Caco-2 (cell line): ENCODE measurements at regions of chr6 and their contacts with region 1.

Region 1: GRCh38 chr6:146041282-146041681 is 12.4 kb downstream of the GRM1 start:
- DNase-seq: peak; percentile 49 to 51
- H3K4me3 ChIP-seq: no peak overlapping the region
- H3K4me3 Mint-ChIP-seq: no peak overlapping the region
- H3K27ac Mint-ChIP-seq: no peak overlapping the region
- H3K4me1 ChIP-seq: no peaks in the 10 kb centered on the region
- H3K4me1 Mint-ChIP-seq: no peaks in the 10 kb centered on the region
- H3K27me3 ChIP-seq: no peaks in the 10 kb centered on the region
- H3K27me3 Mint-ChIP-seq: peaks cover 15% of the 10 kb centered on the region
- CTCF ChIP-seq: peak; percentile 48 to 63

Region 2: GRCh38 chr6:145734486-145735355 is 306.6 kb before region 1 on chr6:
- CTCF ChIA-PET with region 1: no interaction called
- POLR2A ChIA-PET with region 1: interaction called, 11 read pairs
- intact Hi-C with region 1: no loop called
- DNase-seq: peak; percentile 93
- H3K4me3 ChIP-seq: peak overlapping the region; percentile 79
- H3K4me3 Mint-ChIP-seq: peak overlapping the region; percentile 93
- H3K27ac Mint-ChIP-seq: peak overlapping the region; percentile 95
- H3K4me1 ChIP-seq: peaks cover 18% of the 10 kb centered on the region
- H3K4me1 Mint-ChIP-seq: peaks cover 10% of the 10 kb centered on the region
- H3K27me3 ChIP-seq: no peaks in the 10 kb centered on the region
- H3K27me3 Mint-ChIP-seq: no peaks in the 10 kb centered on the region
- CTCF ChIP-seq: no peak

Region 3: DNA sequence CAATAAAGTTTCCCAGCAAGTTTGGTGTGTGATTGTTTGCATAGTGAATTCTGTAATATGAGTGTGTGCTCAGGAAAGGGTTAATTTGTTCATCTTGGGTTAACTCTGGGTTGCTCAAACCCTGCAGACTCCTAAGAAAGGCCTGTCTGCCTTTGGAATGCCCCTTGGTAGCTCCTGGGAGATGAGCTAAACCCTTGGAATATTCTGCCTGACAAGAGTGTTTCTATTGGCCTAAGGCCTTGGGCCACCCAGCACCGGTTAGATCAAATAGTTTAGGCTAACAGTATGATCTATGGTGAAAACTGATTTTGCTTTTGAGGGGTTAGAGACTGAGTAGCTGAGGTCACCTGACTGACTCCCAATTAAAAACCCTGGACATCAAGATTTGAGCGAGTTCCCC is 235.9 kb after region 1 on chr6:
- CTCF ChIA-PET with region 1: no interaction called
- POLR2A ChIA-PET with region 1: no interaction called
- intact Hi-C with region 1: loop called (anchors 10 kb)
- DNase-seq: no peak
- H3K4me3 ChIP-seq: no peak overlapping the region
- H3K4me3 Mint-ChIP-seq: no peak overlapping the region
- H3K27ac Mint-ChIP-seq: no peak overlapping the region
- H3K4me1 ChIP-seq: no peaks in the 10 kb centered on the region
- H3K4me1 Mint-ChIP-seq: no peaks in the 10 kb centered on the region
- H3K27me3 ChIP-seq: no peaks in the 10 kb centered on the region
- H3K27me3 Mint-ChIP-seq: peaks cover 3% of the 10 kb centered on the region
- CTCF ChIP-seq: no peak

Region 4: DNA sequence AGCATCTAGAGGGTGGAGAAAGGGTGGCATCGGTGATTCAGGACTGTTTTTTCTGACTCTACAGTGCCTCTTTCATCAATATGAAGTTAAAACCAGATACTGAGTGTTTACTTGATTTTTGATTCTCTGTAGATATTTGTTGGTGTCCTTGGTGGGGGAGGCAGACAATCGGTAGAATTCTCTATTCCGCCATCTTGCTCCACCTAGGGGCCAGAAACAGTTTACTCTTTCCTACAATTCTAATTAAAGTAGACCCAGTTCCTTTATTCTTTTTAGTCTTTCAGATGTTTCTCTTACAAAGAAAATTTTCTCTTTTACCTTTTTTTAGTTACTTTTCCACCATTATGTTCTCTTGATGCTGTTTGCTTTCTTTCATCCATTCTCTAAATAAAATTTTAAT is 340.2 kb after region 1 on chr6:
- CTCF ChIA-PET with region 1: no interaction called
- POLR2A ChIA-PET with region 1: no interaction called
- intact Hi-C with region 1: loop called (anchors 1 kb)
- DNase-seq: no peak
- H3K4me3 ChIP-seq: no peak overlapping the region
- H3K4me3 Mint-ChIP-seq: no peak overlapping the region
- H3K27ac Mint-ChIP-seq: no peak overlapping the region
- H3K4me1 ChIP-seq: no peaks in the 10 kb centered on the region
- H3K4me1 Mint-ChIP-seq: no peaks in the 10 kb centered on the region
- H3K27me3 ChIP-seq: no peaks in the 10 kb centered on the region
- H3K27me3 Mint-ChIP-seq: peaks cover 3% of the 10 kb centered on the region
- CTCF ChIP-seq: peak; percentile 21 to 22

Region 5: DNA sequence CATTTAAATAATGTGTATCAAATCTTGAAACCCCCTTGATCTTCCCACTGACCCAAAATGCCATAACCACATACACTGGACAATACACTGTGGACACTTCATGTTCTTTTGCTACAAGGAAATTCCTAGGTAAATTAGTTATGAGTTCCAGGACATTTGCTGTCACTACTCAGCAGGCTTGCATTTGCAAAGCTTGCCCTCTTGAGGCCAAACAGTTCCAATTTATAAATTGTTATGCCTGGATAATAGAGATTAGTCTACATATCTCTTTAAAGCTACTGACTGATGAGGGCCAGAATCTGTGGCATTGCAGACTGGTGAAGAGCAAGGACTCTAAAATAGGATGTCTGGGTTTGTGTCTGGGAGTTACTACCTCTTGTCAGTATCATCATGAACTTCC is 484.9 kb after region 1 on chr6:
- CTCF ChIA-PET with region 1: interaction called, 3 read pairs
- POLR2A ChIA-PET with region 1: no interaction called
- intact Hi-C with region 1: loop called (anchors 5 kb)
- DNase-seq: no peak
- H3K4me3 ChIP-seq: no peak overlapping the region
- H3K4me3 Mint-ChIP-seq: no peak overlapping the region
- H3K27ac Mint-ChIP-seq: no peak overlapping the region
- H3K4me1 ChIP-seq: no peaks in the 10 kb centered on the region
- H3K4me1 Mint-ChIP-seq: no peaks in the 10 kb centered on the region
- H3K27me3 ChIP-seq: no peaks in the 10 kb centered on the region
- H3K27me3 Mint-ChIP-seq: peaks cover 11% of the 10 kb centered on the region
- CTCF ChIP-seq: peak in 1 of 2 experiments; percentile 11

Region 6: GRCh38 chr6:146700078-146700686 is 658.9 kb after region 1 on chr6:
- CTCF ChIA-PET with region 1: no interaction called
- POLR2A ChIA-PET with region 1: no interaction called
- intact Hi-C with region 1: loop called (anchors 1 kb)
- DNase-seq: peak; percentile 36 to 54
- H3K4me3 ChIP-seq: no peak overlapping the region
- H3K4me3 Mint-ChIP-seq: no peak overlapping the region
- H3K27ac Mint-ChIP-seq: no peak overlapping the region
- H3K4me1 ChIP-seq: no peaks in the 10 kb centered on the region
- H3K4me1 Mint-ChIP-seq: no peaks in the 10 kb centered on the region
- H3K27me3 ChIP-seq: no peaks in the 10 kb centered on the region
- H3K27me3 Mint-ChIP-seq: peaks cover 10% of the 10 kb centered on the region
- CTCF ChIP-seq: peak; percentile 50 to 74

Region 7: GRCh38 chr6:146785001-146785585 is 743.8 kb after region 1 on chr6:
- CTCF ChIA-PET with region 1: no interaction called
- POLR2A ChIA-PET with region 1: no interaction called
- intact Hi-C with region 1: loop called (anchors 1 kb)
- DNase-seq: peak in 1 of 2 experiments; percentile 36
- H3K4me3 ChIP-seq: no peak overlapping the region
- H3K4me3 Mint-ChIP-seq: no peak overlapping the region
- H3K27ac Mint-ChIP-seq: no peak overlapping the region
- H3K4me1 ChIP-seq: no peaks in the 10 kb centered on the region
- H3K4me1 Mint-ChIP-seq: no peaks in the 10 kb centered on the region
- H3K27me3 ChIP-seq: no peaks in the 10 kb centered on the region
- H3K27me3 Mint-ChIP-seq: peaks cover 7% of the 10 kb centered on the region
- CTCF ChIP-seq: peak; percentile 44 to 48